Activated CD4-positive, alpha-beta T cell treated with anti-CD3 and anti-CD28 coated beads, Interleukin-2, amount 10 ng/mL, durations not matched to agents 24 days and 14 days (primary cell): ENCODE measurements at regions of chr18 and their contacts with region 1.

Region 1: GRCh38 chr18:46481048-46481846 is 175.8 kb downstream of the LOXHD1 start:
- DNase-seq: peak; percentile 86
- H3K4me3 Mint-ChIP-seq: no peak overlapping the region
- H3K27ac Mint-ChIP-seq: no peak overlapping the region
- H3K4me1 Mint-ChIP-seq: no peaks in the 10 kb centered on the region
- H3K27me3 Mint-ChIP-seq: peaks cover 5% of the 10 kb centered on the region

Region 2: DNA sequence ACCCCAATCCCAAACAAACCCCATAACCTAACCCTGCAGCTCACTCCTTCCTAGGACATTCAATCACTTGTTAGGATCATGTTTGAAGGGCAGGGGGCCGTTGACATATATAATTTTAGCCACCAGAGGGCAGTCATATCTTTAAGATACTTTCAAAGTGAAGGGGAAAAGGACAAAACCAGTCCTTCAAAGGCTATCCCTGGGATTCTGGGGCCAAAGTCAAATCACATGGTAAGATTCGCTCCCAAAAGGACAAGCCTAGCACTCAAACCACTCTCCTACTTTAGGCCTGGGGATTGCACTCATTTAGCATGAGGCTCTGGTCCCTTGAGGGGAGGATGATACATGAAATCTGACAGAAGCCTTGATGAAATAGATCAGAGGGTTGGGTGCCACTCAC is 332.4 kb before region 1 on chr18:
- intact Hi-C with region 1: loop called (anchors 2 kb)
- DNase-seq: peak; percentile 88
- H3K4me3 Mint-ChIP-seq: no peak overlapping the region
- H3K27ac Mint-ChIP-seq: peak overlapping the region; percentile 7
- H3K4me1 Mint-ChIP-seq: peaks cover 26% of the 10 kb centered on the region
- H3K27me3 Mint-ChIP-seq: no peaks in the 10 kb centered on the region

Region 3: GRCh38 chr18:46281185-46282176 is 199.8 kb before region 1 on chr18:
- intact Hi-C with region 1: loop called (anchors 1 kb)
- DNase-seq: peak; percentile 89
- H3K4me3 Mint-ChIP-seq: no peak overlapping the region
- H3K27ac Mint-ChIP-seq: no peak overlapping the region
- H3K4me1 Mint-ChIP-seq: peaks cover 6% of the 10 kb centered on the region
- H3K27me3 Mint-ChIP-seq: no peaks in the 10 kb centered on the region